ENCODE measurements at regions of chr7 and their contacts with region 1.

Region 1: GRCh38 chr7:116862234-116862950 is at the start of gene CAPZA2:
- DNase-seq: peak; percentile 93
- H3K4me3 Mint-ChIP-seq: peak within 1 kb of the TSS; percentile 93
- H3K27ac Mint-ChIP-seq: peak within 1 kb of the TSS; percentile 97
- H3K4me1 Mint-ChIP-seq: peaks cover 33% of the 10 kb centered on the region
- H3K27me3 Mint-ChIP-seq: peaks cover 19% of the 10 kb centered on the region
- total RNA-seq, gene CAPZA2: 143 and 165 TPM in 2 replicates

Region 2: GRCh38 chr7:116211006-116211912 is 651.1 kb before region 1 on chr7:
- intact Hi-C with region 1: loop called (anchors 1 kb)
- DNase-seq: peak; percentile 68
- H3K4me3 Mint-ChIP-seq: peak overlapping the region; percentile 95
- H3K27ac Mint-ChIP-seq: peak overlapping the region; percentile 91
- H3K4me1 Mint-ChIP-seq: peaks cover 52% of the 10 kb centered on the region
- H3K27me3 Mint-ChIP-seq: peaks cover 2% of the 10 kb centered on the region

Region 3: DNA sequence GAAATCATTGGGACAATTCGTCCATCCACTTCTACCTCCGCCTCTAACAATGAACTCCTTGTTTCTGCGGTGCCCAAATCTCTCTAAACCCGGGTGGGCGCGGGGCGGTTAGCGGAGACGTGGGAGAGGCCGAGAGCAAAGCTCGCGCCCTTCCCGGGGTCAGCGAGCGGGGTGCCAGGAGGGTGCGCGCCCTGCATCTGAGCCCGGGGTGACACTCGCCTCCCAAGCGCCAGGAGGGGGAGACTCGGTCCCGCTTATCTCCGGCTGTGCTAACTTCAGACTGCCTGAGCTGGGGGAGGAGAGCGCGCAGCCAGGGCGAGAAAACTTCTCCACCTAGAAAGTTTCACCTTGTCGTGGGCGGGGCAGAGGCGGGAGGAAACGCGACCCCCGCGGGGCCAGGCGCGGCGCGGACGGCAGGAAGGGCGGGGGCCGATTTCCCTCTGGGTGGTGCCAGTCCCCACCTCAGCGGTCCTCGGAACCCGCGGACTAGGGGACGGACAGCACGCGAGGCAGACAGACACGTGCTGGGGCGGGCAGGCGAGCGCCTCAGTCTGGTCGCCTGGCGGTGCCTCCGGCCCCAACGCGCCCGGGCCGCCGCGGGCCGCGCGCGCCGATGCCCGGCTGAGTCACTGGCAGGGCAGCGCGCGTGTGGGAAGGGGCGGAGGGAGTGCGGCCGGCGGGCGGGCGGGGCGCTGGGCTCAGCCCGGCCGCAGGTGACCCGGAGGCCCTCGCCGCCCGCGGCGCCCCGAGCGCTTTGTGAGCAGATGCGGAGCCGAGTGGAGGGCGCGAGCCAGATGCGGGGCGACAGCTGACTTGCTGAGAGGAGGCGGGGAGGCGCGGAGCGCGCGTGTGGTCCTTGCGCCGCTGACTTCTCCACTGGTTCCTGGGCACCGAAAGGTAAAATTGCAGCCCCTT is 190.5 kb before region 1 on chr7 and contains the start of gene MET:
- intact Hi-C with region 1: loop called (anchors 1 kb)
- DNase-seq: peak; percentile 33
- H3K4me3 Mint-ChIP-seq: peak within 1 kb of the TSS; percentile 79
- H3K27ac Mint-ChIP-seq: peak within 1 kb of the TSS; percentile 76
- H3K4me1 Mint-ChIP-seq: no peaks in the 10 kb centered on the region
- H3K27me3 Mint-ChIP-seq: peaks cover 67% of the 10 kb centered on the region
- total RNA-seq, gene MET: 3.2 TPM in 2 replicates

Region 4: DNA sequence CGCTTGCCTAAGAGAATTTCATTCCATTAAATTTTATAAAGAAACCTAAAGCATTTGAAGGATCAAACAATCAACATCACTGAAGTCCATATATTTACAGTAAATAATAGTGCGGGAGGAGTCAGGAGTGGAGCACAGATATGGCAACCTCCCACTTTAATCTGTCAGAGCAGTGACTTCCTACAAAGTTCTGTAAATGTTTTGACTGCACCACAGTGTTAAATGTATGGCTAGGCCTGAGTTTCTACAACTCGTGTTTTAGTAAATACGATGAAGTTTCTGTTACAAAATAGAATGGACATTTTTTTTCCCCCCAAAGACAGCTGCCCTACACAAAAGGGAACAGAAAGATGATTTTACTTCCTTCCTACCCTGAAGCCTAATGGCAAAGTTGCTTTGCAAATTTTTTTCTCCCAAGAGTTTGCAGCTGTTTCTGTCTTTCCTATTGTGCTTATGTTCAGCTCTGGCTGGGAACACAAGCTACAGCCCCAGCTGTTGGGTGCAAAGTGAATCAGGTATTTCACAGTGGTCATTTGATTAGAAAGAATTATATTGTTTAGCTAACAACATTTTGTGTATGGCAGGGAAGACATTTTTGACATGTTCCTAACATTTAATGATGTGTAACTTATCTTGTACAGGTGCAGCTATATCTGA is 128.3 kb before region 1 on chr7:
- intact Hi-C with region 1: no loop called
- DNase-seq: no peak
- H3K4me3 Mint-ChIP-seq: no peak overlapping the region
- H3K27ac Mint-ChIP-seq: no peak overlapping the region
- H3K4me1 Mint-ChIP-seq: no peaks in the 10 kb centered on the region
- H3K27me3 Mint-ChIP-seq: peaks cover 2% of the 10 kb centered on the region

Region 5: GRCh38 chr7:116899308-116899707 is 36.9 kb after region 1 on chr7:
- intact Hi-C with region 1: loop called (anchors 5 kb)
- DNase-seq: no peak
- H3K4me3 Mint-ChIP-seq: no peak overlapping the region
- H3K27ac Mint-ChIP-seq: no peak overlapping the region
- H3K4me1 Mint-ChIP-seq: peaks cover 23% of the 10 kb centered on the region
- H3K27me3 Mint-ChIP-seq: no peaks in the 10 kb centered on the region

Region 6: DNA sequence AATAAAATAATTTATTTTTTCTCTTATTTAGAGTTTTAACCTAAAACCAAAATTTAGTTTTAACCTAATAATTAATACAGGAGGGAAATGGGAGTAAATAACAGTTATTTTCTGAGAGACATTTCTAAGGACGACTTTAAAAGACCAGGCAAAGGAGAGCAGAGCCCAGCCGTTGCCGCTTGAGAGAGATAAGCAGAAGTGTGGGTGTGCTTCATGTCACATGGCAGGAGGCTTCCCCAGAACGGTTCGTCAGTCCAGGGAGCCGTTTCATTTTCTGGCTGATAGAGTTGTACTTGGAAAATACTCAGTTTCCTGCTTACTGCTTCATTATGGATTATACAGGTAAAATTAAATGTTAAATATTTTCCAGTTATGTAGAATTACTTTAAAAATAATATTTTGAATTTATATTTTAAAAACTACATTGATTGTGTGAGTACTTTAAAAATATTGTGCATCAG is 152.3 kb after region 1 on chr7:
- intact Hi-C with region 1: loop called (anchors 2 kb)
- DNase-seq: no peak
- H3K4me3 Mint-ChIP-seq: no peak overlapping the region
- H3K27ac Mint-ChIP-seq: no peak overlapping the region
- H3K4me1 Mint-ChIP-seq: peaks cover 40% of the 10 kb centered on the region
- H3K27me3 Mint-ChIP-seq: peaks cover 25% of the 10 kb centered on the region

Region 7: GRCh38 chr7:118183786-118184564 is 1321.6 kb after region 1 on chr7 and contains the start of gene LSM8:
- intact Hi-C with region 1: loop called (anchors 2 kb)
- DNase-seq: peak; percentile 97
- H3K4me3 Mint-ChIP-seq: peak within 1 kb of the TSS; percentile 97
- H3K27ac Mint-ChIP-seq: peak within 1 kb of the TSS; percentile 99
- H3K4me1 Mint-ChIP-seq: peaks cover 40% of the 10 kb centered on the region
- H3K27me3 Mint-ChIP-seq: no peaks in the 10 kb centered on the region
- total RNA-seq, gene LSM8: 45.9 and 46.7 TPM in 2 replicates

Measured in activated T-helper 1 cell treated with anti-CD3 and anti-CD28 coated beads, Interleukin-12 subunit alpha, Interleukin-12 subunit beta, Interleukin-2, Interleukin-4 antibody, amounts not matched to agents 30 ng/mL and 10 ng/mL and 1 ng/mL, durations not matched to agents 14 hours and 24 hours and 36 hours (primary cell).